ENCODE measurements at regions of chr2 and their contacts with region 1.

Region 1: GRCh38 chr2:159982842-159983785 is 79.3 kb downstream of the PLA2R1 start:
- DNase-seq: peak; percentile 44
- H3K4me3 ChIP-seq: no peak overlapping the region
- H3K27me3 ChIP-seq: no peaks in the 10 kb centered on the region
- CTCF ChIP-seq: no peak

Region 2: GRCh38 chr2:160417745-160418397 is 434.8 kb after region 1 on chr2:
- CTCF ChIA-PET with region 1: no interaction called
- POLR2A ChIA-PET with region 1: interaction called, 10 read pairs
- DNase-seq: peak; percentile 80
- H3K4me3 ChIP-seq: no peak overlapping the region
- H3K27me3 ChIP-seq: no peaks in the 10 kb centered on the region
- CTCF ChIP-seq: no peak